ENCODE measurements at regions of chr12 and their contacts with region 1.

Region 1: GRCh38 chr12:14769969-14770495 is 33.2 kb downstream of the WBP11 start:
- DNase-seq: peak; percentile 77
- H3K4me3 ChIP-seq: peak overlapping the region; percentile 22 to 82 (median 70)
- H3K27ac ChIP-seq: peak overlapping the region; percentile 91
- H3K4me1 ChIP-seq: peaks cover 7% of the 10 kb centered on the region
- H3K27me3 ChIP-seq: no peaks in the 10 kb centered on the region
- CTCF ChIP-seq: peak; percentile 73 to 87
- POLR2A ChIP-seq: peak; percentile 25

Region 2: DNA sequence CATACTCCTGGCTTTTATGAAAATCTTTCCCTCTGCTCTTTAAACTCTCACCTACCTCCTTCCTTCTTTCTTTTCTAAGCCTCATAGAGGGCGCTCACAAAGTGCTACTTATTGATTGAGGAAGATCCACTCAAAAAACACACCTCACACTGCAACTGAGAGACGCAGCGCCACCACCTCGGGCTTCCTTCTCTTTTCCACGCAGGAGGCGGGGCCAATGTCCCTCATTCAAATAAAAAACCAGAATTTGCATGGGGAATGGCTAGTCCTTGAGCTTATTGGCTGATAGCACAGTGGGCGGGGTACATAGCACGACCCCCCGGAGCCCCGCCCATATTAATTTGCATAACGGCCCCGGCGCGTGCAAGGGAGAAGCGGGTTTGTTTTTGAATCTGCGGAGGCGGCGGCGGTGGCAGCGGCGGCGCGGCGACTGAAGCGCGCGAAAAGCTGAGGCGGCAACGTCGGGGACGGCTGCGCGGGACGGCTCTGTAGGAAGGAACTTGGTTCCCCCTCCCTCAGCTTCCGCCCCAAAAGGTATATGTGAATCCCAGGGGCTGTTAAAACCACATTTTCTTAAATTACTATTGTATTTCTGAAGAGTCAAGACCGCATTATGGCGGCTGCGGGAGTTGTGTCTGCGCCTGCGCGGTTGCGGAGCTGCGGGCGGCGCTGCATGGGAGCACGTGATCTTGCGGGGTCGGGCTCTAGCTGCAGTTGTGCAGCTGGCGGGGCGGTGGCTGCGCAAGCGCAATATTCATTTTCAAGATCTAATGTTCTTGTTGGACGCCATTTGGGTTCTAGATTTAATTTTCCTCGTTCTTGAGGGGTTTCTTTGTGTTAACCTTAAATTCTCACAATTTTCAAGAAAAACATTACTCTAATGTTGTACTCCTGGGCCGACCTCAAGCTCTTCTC is 404.5 kb before region 1 on chr12 and contains the start of gene ATF7IP:
- CTCF ChIA-PET with region 1: no interaction called
- POLR2A ChIA-PET with region 1: no interaction called
- dilution Hi-C with region 1: no loop called
- intact Hi-C with region 1: loop called (anchors 5 kb)
- DNase-seq: peak; percentile 97
- H3K4me3 ChIP-seq: peak within 1 kb of the TSS; percentile 53 to 98 (median 98)
- H3K27ac ChIP-seq: peak within 1 kb of the TSS; percentile 89
- H3K4me1 ChIP-seq: peaks cover 17% of the 10 kb centered on the region
- H3K27me3 ChIP-seq: no peaks in the 10 kb centered on the region
- CTCF ChIP-seq: no peak
- POLR2A ChIP-seq: peak; percentile 81
- total RNA-seq, gene ATF7IP: 72.4 and 73.5 TPM in 2 replicates

Region 3: DNA sequence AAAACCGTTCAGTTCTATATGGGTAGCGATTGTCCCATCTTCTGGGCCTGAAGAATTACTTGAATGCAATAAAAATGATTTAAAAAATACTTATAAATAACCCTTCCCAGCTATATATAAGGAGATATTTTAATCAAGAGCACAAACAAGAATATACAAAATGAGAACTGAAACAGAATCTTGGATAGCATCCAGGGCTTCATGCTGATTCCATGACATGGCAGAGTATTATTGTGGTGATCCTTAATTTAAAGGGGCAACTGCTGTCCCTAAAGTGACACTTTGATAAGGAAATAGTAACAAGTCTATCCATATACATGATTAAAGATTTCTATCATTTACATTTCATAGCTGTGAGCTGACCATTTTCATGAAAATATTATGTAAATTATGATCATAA is 14.4 kb after region 1 on chr12:
- CTCF ChIA-PET with region 1: interaction called, 11 read pairs
- POLR2A ChIA-PET with region 1: interaction called, 5 read pairs
- dilution Hi-C with region 1: no loop called
- intact Hi-C with region 1: no loop called
- DNase-seq: no peak
- H3K4me3 ChIP-seq: no peak overlapping the region
- H3K27ac ChIP-seq: no peak overlapping the region
- H3K4me1 ChIP-seq: no peaks in the 10 kb centered on the region
- H3K27me3 ChIP-seq: no peaks in the 10 kb centered on the region
- CTCF ChIP-seq: no peak
- POLR2A ChIP-seq: no peak

Region 4: DNA sequence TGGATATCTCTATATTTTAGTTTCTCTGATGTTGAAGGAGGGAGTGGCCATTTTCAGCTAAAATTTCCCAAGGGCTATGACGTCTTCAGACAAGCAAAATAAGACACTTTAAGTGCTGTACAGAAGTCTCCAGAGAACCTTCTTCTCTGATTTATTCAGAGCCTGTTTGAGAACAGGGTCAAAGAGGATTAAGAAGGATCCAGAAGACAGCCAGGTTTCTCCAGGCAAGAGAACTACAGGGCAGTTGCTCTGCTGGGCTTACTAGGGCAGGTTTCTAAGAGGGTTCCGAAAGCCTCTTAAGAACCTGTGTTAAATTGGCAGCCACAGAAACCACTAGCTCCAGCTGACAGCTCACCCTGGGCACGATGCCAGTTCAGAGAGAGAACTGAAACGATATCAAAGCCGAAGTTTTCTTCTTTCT is 114.4 kb after region 1 on chr12:
- CTCF ChIA-PET with region 1: no interaction called
- POLR2A ChIA-PET with region 1: no interaction called
- dilution Hi-C with region 1: no loop called
- intact Hi-C with region 1: loop called (anchors 5 kb)
- DNase-seq: peak; percentile 84
- H3K4me3 ChIP-seq: peak overlapping the region; percentile 17 to 64 (median 62)
- H3K27ac ChIP-seq: peak overlapping the region; percentile 49
- H3K4me1 ChIP-seq: peaks cover 38% of the 10 kb centered on the region
- H3K27me3 ChIP-seq: no peaks in the 10 kb centered on the region
- CTCF ChIP-seq: no peak
- POLR2A ChIP-seq: no peak

Region 5: GRCh38 chr12:14948672-14949071 is 178.6 kb after region 1 on chr12:
- CTCF ChIA-PET with region 1: no interaction called
- POLR2A ChIA-PET with region 1: no interaction called
- dilution Hi-C with region 1: no loop called
- intact Hi-C with region 1: loop called (anchors 2 kb)
- DNase-seq: peak; percentile 93
- H3K4me3 ChIP-seq: peak overlapping the region in 1 of 3 experiments; percentile 36
- H3K27ac ChIP-seq: peak overlapping the region; percentile 94
- H3K4me1 ChIP-seq: peaks cover 72% of the 10 kb centered on the region
- H3K27me3 ChIP-seq: no peaks in the 10 kb centered on the region
- CTCF ChIP-seq: no peak
- POLR2A ChIP-seq: peak; percentile 82

Region 6: DNA sequence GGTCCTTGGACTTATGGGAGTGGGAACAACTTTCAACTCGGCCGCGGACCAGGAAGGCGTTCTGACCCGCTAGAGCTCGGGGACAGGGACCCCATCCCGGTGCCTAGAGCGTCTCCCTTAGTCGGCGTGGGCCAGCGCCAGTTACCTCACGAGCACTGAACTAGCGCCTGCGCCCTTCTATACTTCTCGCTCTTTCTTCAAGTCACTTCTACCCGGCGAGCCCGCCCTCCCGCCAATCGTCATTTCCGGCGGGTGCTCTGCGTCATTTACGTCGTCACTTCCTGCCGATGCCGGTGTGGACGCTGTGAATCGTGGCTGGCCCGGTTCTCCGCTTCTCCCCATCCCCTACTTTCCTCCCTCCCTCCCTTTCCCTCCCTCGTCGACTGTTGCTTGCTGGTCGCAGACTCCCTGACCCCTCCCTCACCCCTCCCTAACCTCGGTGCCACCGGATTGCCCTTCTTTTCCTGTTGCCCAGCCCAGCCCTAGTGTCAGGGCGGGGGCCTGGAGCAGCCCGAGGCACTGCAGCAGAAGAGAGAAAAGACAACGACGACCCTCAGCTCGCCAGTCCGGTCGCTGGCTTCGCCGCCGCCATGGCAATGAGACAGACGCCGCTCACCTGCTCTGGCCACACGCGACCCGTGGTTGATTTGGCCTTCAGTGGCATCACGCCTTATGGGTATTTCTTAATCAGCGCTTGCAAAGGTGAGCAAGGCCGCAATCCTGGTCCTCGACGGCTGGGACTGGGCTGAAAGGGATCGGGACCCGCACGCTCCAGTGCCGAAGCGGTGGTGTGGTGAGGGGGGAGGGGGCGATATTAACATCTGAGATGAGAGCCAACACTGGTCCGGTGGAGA is 1112.3 kb after region 1 on chr12 and contains the start of gene STRAP:
- CTCF ChIA-PET with region 1: no interaction called
- POLR2A ChIA-PET with region 1: no interaction called
- dilution Hi-C with region 1: no loop called
- intact Hi-C with region 1: loop called (anchors 5 kb)
- DNase-seq: peak; percentile 99
- H3K4me3 ChIP-seq: peak within 1 kb of the TSS; percentile 59 to 100 (median 94)
- H3K27ac ChIP-seq: peak within 1 kb of the TSS; percentile 97
- H3K4me1 ChIP-seq: peaks cover 24% of the 10 kb centered on the region
- H3K27me3 ChIP-seq: no peaks in the 10 kb centered on the region
- CTCF ChIP-seq: no peak
- POLR2A ChIP-seq: peak; percentile 97
- total RNA-seq, gene STRAP: 138 and 144 TPM in 2 replicates

Measured in endothelial cell of umbilical vein (primary cell).